WTC11 (cell line): ENCODE measurements at regions of chr3 and their contacts with region 1.

Region 1: GRCh38 chr3:179929091-179929529 is 107.6 kb downstream of the PEX5L start:
- DNase-seq: peak; percentile 67
- ATAC-seq: peak; percentile 70
- H3K4me3 Mint-ChIP-seq: no peak overlapping the region
- H3K27ac Mint-ChIP-seq: no peak overlapping the region
- H3K4me1 Mint-ChIP-seq: peaks cover 23% of the 10 kb centered on the region
- H3K27me3 Mint-ChIP-seq: no peaks in the 10 kb centered on the region
- CTCF ChIP-seq: peak; percentile 38; the same call in 1 of the 2 replicates

Region 2: GRCh38 chr3:179666436-179667035 is 262.6 kb before region 1 on chr3:
- CTCF ChIA-PET with region 1: no interaction called
- POLR2A ChIA-PET with region 1: no interaction called
- DNase-seq: peak; percentile 24
- ATAC-seq: peak; percentile 74
- H3K4me3 Mint-ChIP-seq: no peak overlapping the region
- H3K27ac Mint-ChIP-seq: no peak overlapping the region
- H3K4me1 Mint-ChIP-seq: peaks cover 26% of the 10 kb centered on the region
- H3K27me3 Mint-ChIP-seq: no peaks in the 10 kb centered on the region
- CTCF ChIP-seq: no peak

Region 3: DNA sequence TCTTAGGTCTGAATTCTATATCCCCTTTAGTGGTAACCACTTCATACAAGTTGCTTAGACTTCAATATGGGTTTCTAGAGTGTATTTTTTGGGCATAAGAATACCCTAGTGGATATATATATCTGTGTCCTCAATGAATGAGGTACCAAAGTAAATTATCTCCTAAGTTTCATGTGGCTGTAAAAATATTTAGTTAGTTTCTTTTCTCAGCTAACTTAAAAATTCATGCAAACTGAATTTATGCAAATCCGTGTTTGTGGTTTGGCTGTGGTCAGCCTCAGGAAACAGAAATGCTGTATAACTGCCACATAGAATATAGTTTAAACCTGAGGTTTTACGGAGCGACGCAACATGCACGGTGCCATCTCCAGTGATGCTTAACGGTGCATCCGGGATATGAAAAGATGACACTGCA is 27.3 kb after region 1 on chr3:
- CTCF ChIA-PET with region 1: no interaction called
- POLR2A ChIA-PET with region 1: no interaction called
- DNase-seq: no peak
- ATAC-seq: no peak
- H3K4me3 Mint-ChIP-seq: no peak overlapping the region
- H3K27ac Mint-ChIP-seq: no peak overlapping the region
- H3K4me1 Mint-ChIP-seq: peaks cover 11% of the 10 kb centered on the region
- H3K27me3 Mint-ChIP-seq: no peaks in the 10 kb centered on the region
- CTCF ChIP-seq: no peak

Region 4: GRCh38 chr3:179981646-179982045 is 52.5 kb after region 1 on chr3:
- CTCF ChIA-PET with region 1: no interaction called
- POLR2A ChIA-PET with region 1: no interaction called
- DNase-seq: no peak
- ATAC-seq: no peak
- H3K4me3 Mint-ChIP-seq: no peak overlapping the region
- H3K27ac Mint-ChIP-seq: no peak overlapping the region
- H3K4me1 Mint-ChIP-seq: peaks cover 5% of the 10 kb centered on the region
- H3K27me3 Mint-ChIP-seq: no peaks in the 10 kb centered on the region
- CTCF ChIP-seq: no peak

Region 5: GRCh38 chr3:180018543-180018942 is 89.4 kb after region 1 on chr3:
- CTCF ChIA-PET with region 1: interaction called, 17 read pairs
- POLR2A ChIA-PET with region 1: no interaction called
- DNase-seq: no peak
- ATAC-seq: peak; percentile 48; the same call in 1 of the 2 replicates
- H3K4me3 Mint-ChIP-seq: no peak overlapping the region
- H3K27ac Mint-ChIP-seq: no peak overlapping the region
- H3K4me1 Mint-ChIP-seq: 0 out of 2 replicates have a peak, but pooled peaks cover 3% of the 10 kb centered on the region
- H3K27me3 Mint-ChIP-seq: no peaks in the 10 kb centered on the region
- CTCF ChIP-seq: no peak